ENCODE measurements at regions of chr3 and their contacts with region 1.

Region 1: GRCh38 chr3:51471775-51472652 is 27.8 kb downstream of the DCAF1 start:
- DNase-seq: no peak
- ATAC-seq: no peak
- H3K4me3 ChIP-seq: no peak overlapping the region
- H3K27ac ChIP-seq: no peak overlapping the region
- H3K4me1 ChIP-seq: no peaks in the 10 kb centered on the region
- H3K27me3 ChIP-seq: no peaks in the 10 kb centered on the region
- CTCF ChIP-seq: no peak

Region 2: GRCh38 chr3:51057121-51057520 is 414.9 kb before region 1 on chr3:
- intact Hi-C with region 1: no loop called
- DNase-seq: no peak
- ATAC-seq: no peak
- H3K4me3 ChIP-seq: no peak overlapping the region
- H3K27ac ChIP-seq: no peak overlapping the region
- H3K4me1 ChIP-seq: no peaks in the 10 kb centered on the region
- H3K27me3 ChIP-seq: no peaks in the 10 kb centered on the region
- CTCF ChIP-seq: no peak

Region 3: DNA sequence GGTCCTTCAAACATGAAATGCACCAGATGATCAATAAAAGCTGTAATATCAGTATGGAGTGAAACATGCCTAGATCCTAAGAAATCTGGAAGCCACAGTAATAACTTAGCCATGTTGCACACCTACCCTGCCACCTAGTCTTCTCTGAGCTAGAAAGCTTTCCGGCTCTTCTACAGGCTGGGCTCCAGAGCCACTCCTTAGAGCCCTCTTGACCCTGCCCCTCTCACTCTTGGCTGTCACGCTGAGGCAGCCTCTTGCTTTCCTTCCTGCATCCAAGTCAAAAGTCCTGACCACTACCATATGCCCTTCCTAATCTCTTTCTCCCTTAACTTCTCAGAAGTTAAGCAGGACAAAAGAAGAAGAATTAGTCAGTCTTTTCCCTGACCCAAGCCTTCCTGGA is 63.2 kb before region 1 on chr3:
- intact Hi-C with region 1: loop called in 1 of 2 experiments (anchors 10 kb)
- DNase-seq: no peak
- ATAC-seq: no peak
- H3K4me3 ChIP-seq: no peak overlapping the region
- H3K27ac ChIP-seq: no peak overlapping the region
- H3K4me1 ChIP-seq: no peaks in the 10 kb centered on the region
- H3K27me3 ChIP-seq: no peaks in the 10 kb centered on the region
- CTCF ChIP-seq: no peak